ENCODE measurements at regions of chr1 and their contacts with region 1.

Region 1: GRCh38 chr1:99645699-99646531 is at the start of gene PALMD:
- DNase-seq: peak; percentile 60
- ATAC-seq: peak; percentile 67
- H3K4me3 ChIP-seq: peak within 1 kb of the TSS; percentile 70
- H3K27ac ChIP-seq: peak within 1 kb of the TSS; percentile 70
- H3K4me1 ChIP-seq: peaks cover 32% of the 10 kb centered on the region
- H3K27me3 ChIP-seq: no peaks in the 10 kb centered on the region
- CTCF ChIP-seq: no peak
- total RNA-seq, gene PALMD: 8.0 and 8.2 TPM in 2 replicates

Region 2: DNA sequence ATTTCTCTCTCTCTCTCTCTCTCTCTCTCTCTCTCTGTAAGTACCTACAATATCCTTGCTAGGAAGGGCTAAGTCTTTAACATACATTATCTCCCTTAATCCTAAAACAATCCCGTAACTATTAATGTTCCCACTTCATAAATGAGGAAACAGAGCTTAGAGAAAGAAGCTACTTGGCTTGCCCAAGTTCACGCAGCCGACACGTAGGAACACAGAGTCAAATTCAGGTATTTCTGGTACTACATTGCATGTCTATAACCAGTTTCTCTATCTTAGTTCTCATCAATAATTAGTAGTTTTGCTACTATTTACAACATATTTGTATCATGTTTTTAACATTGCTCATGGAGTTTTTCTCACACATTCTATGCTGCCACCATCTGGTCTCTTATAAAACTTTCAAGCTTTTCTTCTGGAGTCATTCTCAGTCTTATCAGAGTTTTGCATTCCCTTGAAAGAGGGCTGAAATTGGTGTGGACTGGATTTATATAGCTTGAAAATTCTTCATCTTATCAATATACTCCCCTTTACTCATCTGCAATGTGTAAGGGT is 118.9 kb before region 1 on chr1:
- CTCF ChIA-PET with region 1: interaction called, 5 read pairs
- POLR2A ChIA-PET with region 1: no interaction called
- intact Hi-C with region 1: loop called (anchors 5 kb)
- DNase-seq: peak; percentile 51
- ATAC-seq: peak; percentile 43; the same call in 1 of the 2 replicates
- H3K4me3 ChIP-seq: no peak overlapping the region
- H3K27ac ChIP-seq: no peak overlapping the region
- H3K4me1 ChIP-seq: no peaks in the 10 kb centered on the region
- H3K27me3 ChIP-seq: no peaks in the 10 kb centered on the region
- CTCF ChIP-seq: peak; percentile 72

Region 3: DNA sequence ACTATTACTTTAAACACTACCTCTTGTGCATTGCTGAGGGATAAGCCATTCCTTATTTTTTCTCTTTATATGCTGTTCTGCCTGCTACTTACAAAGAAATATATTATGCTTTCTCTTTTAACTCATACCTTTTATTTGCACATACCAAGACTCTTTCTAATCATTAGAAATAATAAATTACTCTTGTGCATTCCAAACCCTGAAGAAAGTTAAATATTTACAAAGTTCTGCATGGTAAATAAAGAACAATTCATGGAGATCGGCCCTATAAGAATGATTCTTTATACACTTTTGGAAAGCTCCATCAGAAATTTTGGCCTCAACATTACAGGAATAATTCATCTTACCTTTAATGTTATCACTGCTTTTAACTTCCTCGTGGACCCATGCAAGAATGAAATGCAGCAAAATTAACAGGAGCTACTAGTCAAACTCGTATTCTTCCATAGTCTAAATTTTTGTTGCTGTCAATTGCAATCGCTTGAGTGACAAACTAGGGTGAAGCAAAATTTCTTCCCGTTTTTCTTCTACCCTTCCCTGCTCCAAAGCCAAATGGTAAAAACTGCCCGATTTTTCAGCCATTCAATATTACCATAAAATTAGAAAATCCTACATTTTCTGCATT is 86.6 kb before region 1 on chr1:
- CTCF ChIA-PET with region 1: no interaction called
- POLR2A ChIA-PET with region 1: no interaction called
- intact Hi-C with region 1: loop called (anchors 1 kb)
- DNase-seq: peak; percentile 80
- ATAC-seq: peak; percentile 72
- H3K4me3 ChIP-seq: peak overlapping the region; percentile 40
- H3K27ac ChIP-seq: peak overlapping the region; percentile 96
- H3K4me1 ChIP-seq: peaks cover 52% of the 10 kb centered on the region
- H3K27me3 ChIP-seq: no peaks in the 10 kb centered on the region
- CTCF ChIP-seq: no peak

Region 4: GRCh38 chr1:99573431-99574217 is 72.3 kb before region 1 on chr1:
- CTCF ChIA-PET with region 1: no interaction called
- POLR2A ChIA-PET with region 1: no interaction called
- intact Hi-C with region 1: loop called (anchors 1 kb)
- DNase-seq: no peak
- ATAC-seq: no peak
- H3K4me3 ChIP-seq: no peak overlapping the region
- H3K27ac ChIP-seq: no peak overlapping the region
- H3K4me1 ChIP-seq: peaks cover 33% of the 10 kb centered on the region
- H3K27me3 ChIP-seq: no peaks in the 10 kb centered on the region
- CTCF ChIP-seq: no peak

Region 5: GRCh38 chr1:99590578-99591209 is 55.2 kb before region 1 on chr1:
- CTCF ChIA-PET with region 1: no interaction called
- POLR2A ChIA-PET with region 1: interaction called, 4 read pairs
- intact Hi-C with region 1: loop called (anchors 5 kb)
- DNase-seq: peak; percentile 91
- ATAC-seq: peak; percentile 99
- H3K4me3 ChIP-seq: peak overlapping the region; percentile 14; the same call in 1 of the 2 replicates
- H3K27ac ChIP-seq: peak overlapping the region; percentile 94
- H3K4me1 ChIP-seq: peaks cover 22% of the 10 kb centered on the region
- H3K27me3 ChIP-seq: no peaks in the 10 kb centered on the region
- CTCF ChIP-seq: no peak

Region 6: GRCh38 chr1:99659755-99660210 is 13.9 kb after region 1 on chr1:
- CTCF ChIA-PET with region 1: interaction called, 4 read pairs
- POLR2A ChIA-PET with region 1: interaction called, 3 read pairs
- intact Hi-C with region 1: loop called (anchors 1 kb)
- DNase-seq: peak; percentile 94
- ATAC-seq: peak; percentile 96
- H3K4me3 ChIP-seq: peak overlapping the region; percentile 11; the same call in 1 of the 2 replicates
- H3K27ac ChIP-seq: peak overlapping the region; percentile 94
- H3K4me1 ChIP-seq: peaks cover 35% of the 10 kb centered on the region
- H3K27me3 ChIP-seq: no peaks in the 10 kb centered on the region
- CTCF ChIP-seq: no peak

Region 7: DNA sequence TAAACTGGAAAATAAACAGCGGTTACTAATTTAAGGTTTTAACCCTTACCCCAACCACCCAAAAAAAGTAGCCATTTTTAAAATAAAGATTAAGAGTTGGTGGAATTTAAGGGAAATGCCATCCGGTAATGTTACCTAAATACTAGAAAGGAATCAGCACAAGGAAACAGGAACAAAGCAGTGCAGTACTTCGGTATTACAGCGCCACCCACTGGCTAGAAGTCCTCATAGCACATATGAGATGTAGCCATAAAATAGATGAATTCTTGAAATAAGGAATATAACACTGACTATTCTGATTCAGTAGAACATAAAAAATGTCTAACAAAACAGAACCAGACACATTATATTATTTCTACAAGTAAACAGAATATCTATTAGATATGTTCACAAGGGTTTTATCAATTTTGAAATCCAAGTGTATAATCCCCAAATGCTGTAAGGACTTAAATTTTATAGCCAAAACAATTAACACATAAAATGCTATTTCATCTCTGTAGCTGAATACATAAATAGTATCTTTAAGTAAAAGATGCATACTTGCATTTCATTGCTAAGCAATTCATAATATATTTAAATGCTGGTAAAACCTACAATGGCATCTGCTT is 61.7 kb after region 1 on chr1:
- CTCF ChIA-PET with region 1: no interaction called
- POLR2A ChIA-PET with region 1: no interaction called
- intact Hi-C with region 1: loop called (anchors 2 kb)
- DNase-seq: peak; percentile 81
- ATAC-seq: peak; percentile 77
- H3K4me3 ChIP-seq: no peak overlapping the region
- H3K27ac ChIP-seq: no peak overlapping the region
- H3K4me1 ChIP-seq: no peaks in the 10 kb centered on the region
- H3K27me3 ChIP-seq: no peaks in the 10 kb centered on the region
- CTCF ChIP-seq: peak; percentile 96